Pancreas (tissue), 10 donors: ENCODE measurements at regions of chr17 and their contacts with region 1.

Region 1: GRCh38 chr17:10618202-10618635 is 38.9 kb downstream of the MYH3 start:
- DNase-seq: peak; percentile 35 to 72 (median 62)
- ATAC-seq: peak; percentile 85 to 92 (median 86)
- H3K4me3 ChIP-seq: no peak overlapping the region
- H3K27ac ChIP-seq: no peak overlapping the region
- H3K4me1 ChIP-seq: no peaks in the 10 kb centered on the region
- H3K27me3 ChIP-seq: no peaks in the 10 kb centered on the region
- CTCF ChIP-seq: peak; percentile 64 to 84 (median 75)

Region 2: DNA sequence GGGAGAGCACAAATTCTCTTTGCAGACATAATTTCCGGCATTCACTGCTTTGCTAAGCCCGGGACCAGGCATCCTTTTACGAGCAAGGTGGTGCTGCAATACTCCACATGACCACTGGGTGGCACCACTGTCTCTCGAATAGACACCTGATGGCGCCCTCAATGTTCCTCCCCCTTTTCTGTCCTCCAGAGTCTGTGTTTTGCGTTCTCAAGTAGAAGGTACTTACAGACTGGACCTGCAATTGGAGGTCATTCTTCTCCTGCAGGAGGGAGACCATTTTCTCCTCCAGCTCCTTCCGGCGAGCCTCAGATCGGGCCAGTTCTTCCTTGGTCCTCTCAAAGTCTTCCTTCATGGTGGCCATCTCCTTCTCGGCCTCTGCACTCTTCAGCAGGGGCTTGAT is 290.6 kb before region 1 on chr17:
- intact Hi-C with region 1: loop called in 2 of 3 experiments (anchors 5 to 10 kb)
- DNase-seq: peak; percentile 39 to 92 (median 74)
- ATAC-seq: peak; percentile 38 to 83 (median 76)
- H3K4me3 ChIP-seq: no peak overlapping the region
- H3K27ac ChIP-seq: no peak overlapping the region
- H3K4me1 ChIP-seq: no peaks in the 10 kb centered on the region
- H3K27me3 ChIP-seq: no peaks in the 10 kb centered on the region
- CTCF ChIP-seq: peak; percentile 81 to 90 (median 86)